ENCODE measurements at regions of chr9 and their contacts with region 1.

Region 1: GRCh38 chr9:14428781-14429230 is 114.9 kb upstream of the NFIB start:
- DNase-seq: peak; percentile 60
- H3K4me3 Mint-ChIP-seq: no peak overlapping the region
- H3K27ac Mint-ChIP-seq: no peak overlapping the region
- H3K4me1 Mint-ChIP-seq: no peaks in the 10 kb centered on the region
- H3K27me3 Mint-ChIP-seq: peaks cover 5% of the 10 kb centered on the region

Region 2: DNA sequence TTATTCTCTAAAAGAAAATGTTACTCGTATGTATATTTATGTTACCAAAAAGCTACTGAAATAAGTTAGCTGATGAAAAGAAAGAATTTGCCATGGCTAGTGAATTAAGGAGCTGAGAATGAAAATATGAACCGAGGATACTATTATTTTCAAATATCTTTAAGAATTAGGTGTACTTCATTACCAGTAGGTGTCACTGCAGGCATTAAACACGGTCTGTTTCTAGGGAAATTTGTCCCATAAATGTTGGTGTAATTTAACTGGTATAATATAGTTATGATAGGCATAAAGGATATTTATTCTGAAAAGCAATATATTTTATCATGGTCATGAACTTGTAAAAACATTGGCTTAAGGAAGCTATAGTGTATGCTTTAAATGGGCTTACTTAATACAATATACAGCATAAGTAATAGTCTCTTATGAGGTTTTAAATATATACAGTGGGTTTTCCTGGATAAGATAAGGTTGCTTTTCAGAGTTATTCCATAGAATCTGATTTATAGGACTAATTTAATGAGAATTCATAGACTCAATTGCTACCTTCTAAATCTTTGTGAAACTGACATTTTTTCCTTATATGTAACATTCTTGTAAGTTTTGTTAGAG is 1076.9 kb before region 1 on chr9:
- CTCF ChIA-PET with region 1: no interaction called
- intact Hi-C with region 1: loop called (anchors 10 kb)
- DNase-seq: no peak
- H3K4me3 Mint-ChIP-seq: no peak overlapping the region
- H3K27ac Mint-ChIP-seq: no peak overlapping the region
- H3K4me1 Mint-ChIP-seq: no peaks in the 10 kb centered on the region
- H3K27me3 Mint-ChIP-seq: no peaks in the 10 kb centered on the region

Region 3: DNA sequence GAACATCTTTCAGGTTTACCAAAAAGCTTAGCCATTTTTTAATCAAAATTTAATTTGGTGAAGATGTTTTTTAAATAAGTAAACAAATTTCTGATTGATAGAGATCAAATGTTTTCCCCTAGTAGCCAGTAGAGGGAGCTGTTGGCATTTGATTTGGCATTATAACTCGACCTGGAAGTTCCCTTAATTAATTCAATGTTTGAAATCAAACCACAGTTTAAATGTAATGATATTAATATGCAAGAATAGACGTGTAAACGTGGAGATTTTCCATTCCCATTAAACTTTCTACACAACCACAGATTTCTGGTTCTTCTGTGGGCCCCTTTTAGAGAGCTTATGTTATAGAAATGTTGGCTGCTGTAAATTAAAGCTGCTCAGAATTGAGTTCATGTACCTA is 1001.2 kb before region 1 on chr9:
- CTCF ChIA-PET with region 1: no interaction called
- intact Hi-C with region 1: loop called (anchors 2 kb)
- DNase-seq: no peak
- H3K4me3 Mint-ChIP-seq: no peak overlapping the region
- H3K27ac Mint-ChIP-seq: no peak overlapping the region
- H3K4me1 Mint-ChIP-seq: no peaks in the 10 kb centered on the region
- H3K27me3 Mint-ChIP-seq: peaks cover 2% of the 10 kb centered on the region

Region 4: GRCh38 chr9:14415947-14416346 is 12.9 kb before region 1 on chr9:
- CTCF ChIA-PET with region 1: interaction called, 26 read pairs
- intact Hi-C with region 1: no loop called
- DNase-seq: no peak
- H3K4me3 Mint-ChIP-seq: no peak overlapping the region
- H3K27ac Mint-ChIP-seq: no peak overlapping the region
- H3K4me1 Mint-ChIP-seq: no peaks in the 10 kb centered on the region
- H3K27me3 Mint-ChIP-seq: no peaks in the 10 kb centered on the region

Region 5: GRCh38 chr9:14500705-14501104 is 71.9 kb after region 1 on chr9:
- CTCF ChIA-PET with region 1: no interaction called
- intact Hi-C with region 1: no loop called
- DNase-seq: no peak
- H3K4me3 Mint-ChIP-seq: no peak overlapping the region
- H3K27ac Mint-ChIP-seq: no peak overlapping the region
- H3K4me1 Mint-ChIP-seq: no peaks in the 10 kb centered on the region
- H3K27me3 Mint-ChIP-seq: no peaks in the 10 kb centered on the region

Region 6: GRCh38 chr9:16385590-16385989 is 1956.8 kb after region 1 on chr9:
- CTCF ChIA-PET with region 1: no interaction called
- intact Hi-C with region 1: no loop called
- DNase-seq: no peak
- H3K4me3 Mint-ChIP-seq: no peak overlapping the region
- H3K27ac Mint-ChIP-seq: no peak overlapping the region
- H3K4me1 Mint-ChIP-seq: no peaks in the 10 kb centered on the region
- H3K27me3 Mint-ChIP-seq: no peaks in the 10 kb centered on the region